ENCODE measurements at regions of chr10 and their contacts with region 1.

Region 1: GRCh38 chr10:22666287-22667092 is 47.9 kb downstream of the PIP4K2A start:
- DNase-seq: peak; percentile 67
- H3K4me3 Mint-ChIP-seq: peak overlapping the region; percentile 77
- H3K27ac Mint-ChIP-seq: peak overlapping the region; percentile 92
- H3K4me1 Mint-ChIP-seq: peaks cover 75% of the 10 kb centered on the region
- H3K27me3 Mint-ChIP-seq: no peaks in the 10 kb centered on the region

Region 2: DNA sequence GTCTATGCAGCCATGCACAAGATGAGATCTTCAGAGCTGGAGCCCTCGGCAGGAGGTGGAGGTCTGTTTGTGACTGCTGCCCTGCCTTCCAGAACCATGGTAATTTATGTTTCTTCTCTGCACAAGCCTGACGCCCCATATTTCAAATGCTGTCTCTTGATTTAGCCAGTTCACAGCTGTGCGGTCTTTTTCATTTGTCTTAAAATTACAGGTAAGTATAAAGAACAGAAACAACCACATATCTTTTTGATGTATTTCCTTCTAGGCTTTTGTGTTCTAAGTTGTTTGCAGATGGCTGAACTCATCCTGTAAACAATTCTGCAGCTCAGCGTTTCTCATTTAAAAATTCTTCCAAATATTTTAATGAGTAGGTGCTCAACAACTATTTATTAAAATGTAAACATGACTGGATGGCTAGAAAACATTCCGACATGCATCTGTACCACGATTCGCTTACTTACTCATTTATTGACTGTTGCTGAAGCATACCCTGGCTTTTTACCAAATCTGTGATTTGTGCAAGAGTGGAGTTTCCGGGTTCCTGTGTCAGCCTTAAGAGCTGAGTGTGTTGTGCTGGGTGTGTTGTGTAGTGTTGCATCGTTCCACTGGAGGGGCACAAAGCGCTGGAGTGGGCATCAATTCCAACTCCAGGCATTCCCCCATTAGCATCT is 11.0 kb before region 1 on chr10:
- CTCF ChIA-PET with region 1: interaction called, 5 read pairs
- POLR2A ChIA-PET with region 1: interaction called, 15 read pairs
- DNase-seq: no peak
- H3K4me3 Mint-ChIP-seq: peak overlapping the region; percentile 36
- H3K27ac Mint-ChIP-seq: peak overlapping the region; percentile 85
- H3K4me1 Mint-ChIP-seq: peaks cover 94% of the 10 kb centered on the region
- H3K27me3 Mint-ChIP-seq: no peaks in the 10 kb centered on the region